ENCODE measurements at regions of chr1 and their contacts with region 1.

Region 1: GRCh38 chr1:147084273-147085096 is 87.8 kb downstream of the PRKAB2 start:
- DNase-seq: peak; percentile 81 to 85
- H3K4me3 ChIP-seq: peak overlapping the region; percentile 74 to 95 (median 88)
- H3K27ac ChIP-seq: peak overlapping the region; percentile 100
- H3K4me1 ChIP-seq: peaks cover 3 to 20% (median 12%) of the 10 kb centered on the region in 4 experiments; a peak in 6 of 7 replicates
- H3K27me3 ChIP-seq: peaks cover 21 to 62% (median 48%) of the 10 kb centered on the region in 4 experiments
- CTCF ChIP-seq: no peak
- EP300 ChIP-seq: no peak; a peak in 1 of 3 replicates
- POLR2A ChIP-seq: peak; percentile 100
- RAD21 ChIP-seq: no peak

Region 2: DNA sequence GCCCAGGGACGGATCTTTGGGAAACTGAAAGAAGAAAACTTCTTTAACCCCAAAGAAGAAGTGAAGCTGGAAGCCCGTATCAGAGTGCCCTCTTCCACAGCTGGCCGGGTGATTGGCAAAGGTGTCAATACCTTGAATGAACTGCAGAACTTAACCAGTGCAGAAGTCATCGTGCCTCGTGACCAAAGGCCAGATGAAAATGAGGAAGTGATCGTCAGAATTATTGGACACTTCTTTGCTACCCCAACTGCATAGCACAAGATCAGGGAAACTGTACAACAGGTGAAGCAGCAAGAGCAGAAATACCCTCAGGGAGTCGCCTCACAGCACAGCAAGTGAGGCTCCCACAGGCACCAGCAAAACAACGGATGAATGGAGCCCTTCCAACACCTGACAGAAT is 32.3 kb before region 1 on chr1:
- CTCF ChIA-PET with region 1: no interaction called
- POLR2A ChIA-PET with region 1: interaction called, 22 read pairs
- DNase-seq: no peak
- H3K4me3 ChIP-seq: no peak overlapping the region
- H3K27ac ChIP-seq: no peak overlapping the region
- H3K4me1 ChIP-seq: no peaks in the 10 kb centered on the region
- H3K27me3 ChIP-seq: no peaks in the 10 kb centered on the region
- CTCF ChIP-seq: no peak
- EP300 ChIP-seq: no peak
- POLR2A ChIP-seq: no peak
- RAD21 ChIP-seq: no peak

Region 3: DNA sequence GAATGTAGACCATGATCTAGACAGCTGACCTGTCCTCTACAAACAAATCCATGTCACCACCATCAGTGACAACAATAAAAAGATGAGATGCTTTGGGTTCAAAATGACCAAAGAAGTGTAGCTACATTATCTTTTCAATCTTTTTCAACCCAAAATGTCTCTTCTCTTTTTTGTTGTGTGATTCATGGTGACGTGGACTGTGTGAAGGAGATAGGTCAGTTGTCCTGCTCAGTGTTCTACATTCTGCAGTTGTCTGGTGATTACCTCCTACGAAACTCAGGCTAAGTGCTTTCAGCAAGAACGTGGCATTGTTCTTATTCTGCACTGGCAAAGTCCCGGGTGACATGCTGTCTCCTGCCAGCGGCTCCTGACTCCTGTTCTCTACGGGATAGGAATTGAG is 14.7 kb after region 1 on chr1:
- CTCF ChIA-PET with region 1: interaction called, 4 read pairs
- POLR2A ChIA-PET with region 1: interaction called, 47 read pairs
- DNase-seq: no peak
- H3K4me3 ChIP-seq: no peak overlapping the region
- H3K27ac ChIP-seq: no peak overlapping the region
- H3K4me1 ChIP-seq: peaks cover 0 to 3% (median 0%) of the 10 kb centered on the region in 4 experiments; a peak in 1 of 7 replicates
- H3K27me3 ChIP-seq: no peaks in the 10 kb centered on the region
- CTCF ChIP-seq: no peak
- EP300 ChIP-seq: no peak
- POLR2A ChIP-seq: no peak
- RAD21 ChIP-seq: no peak

Region 4: GRCh38 chr1:147124266-147124665 is 39.8 kb after region 1 on chr1:
- CTCF ChIA-PET with region 1: no interaction called
- POLR2A ChIA-PET with region 1: interaction called, 12 read pairs
- DNase-seq: no peak
- H3K4me3 ChIP-seq: no peak overlapping the region
- H3K27ac ChIP-seq: no peak overlapping the region
- H3K4me1 ChIP-seq: peaks cover 0 to 5% (median 0%) of the 10 kb centered on the region in 4 experiments; a peak in 3 of 7 replicates
- H3K27me3 ChIP-seq: no peaks in the 10 kb centered on the region
- CTCF ChIP-seq: no peak
- EP300 ChIP-seq: no peak
- POLR2A ChIP-seq: no peak
- RAD21 ChIP-seq: no peak

Region 5: DNA sequence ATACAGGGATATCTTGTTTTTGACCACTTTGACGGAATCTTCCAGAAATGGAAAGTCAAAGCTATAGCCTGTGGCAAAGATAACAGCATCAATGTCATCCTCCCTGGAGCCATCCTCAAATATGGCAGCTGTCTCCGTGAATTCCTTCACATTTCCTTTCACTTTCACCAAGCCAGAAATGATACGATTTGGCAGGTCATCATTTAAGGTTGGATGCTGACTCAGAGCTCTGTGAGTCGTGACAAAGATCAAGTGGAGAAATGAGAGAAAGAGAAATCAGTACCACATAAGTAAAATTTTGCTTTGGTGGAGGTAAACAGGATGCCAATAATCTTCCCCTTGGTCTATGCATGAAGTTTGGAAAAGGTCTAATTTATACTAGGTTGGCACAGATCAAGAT is 116.8 kb after region 1 on chr1:
- CTCF ChIA-PET with region 1: no interaction called
- POLR2A ChIA-PET with region 1: no interaction called
- DNase-seq: no peak
- H3K4me3 ChIP-seq: no peak overlapping the region
- H3K27ac ChIP-seq: no peak overlapping the region
- H3K4me1 ChIP-seq: no peaks in the 10 kb centered on the region
- H3K27me3 ChIP-seq: no peaks in the 10 kb centered on the region
- CTCF ChIP-seq: no peak
- EP300 ChIP-seq: no peak
- POLR2A ChIP-seq: no peak
- RAD21 ChIP-seq: no peak

Region 6: GRCh38 chr1:147225193-147225730 is 140.8 kb after region 1 on chr1 and contains the start of gene FMO5:
- CTCF ChIA-PET with region 1: no interaction called
- POLR2A ChIA-PET with region 1: interaction called, 19 read pairs
- DNase-seq: peak; percentile 44 to 65
- H3K4me3 ChIP-seq: peak within 1 kb of the TSS; percentile 55 to 82 (median 76)
- H3K27ac ChIP-seq: no peak within 1 kb of the TSS
- H3K4me1 ChIP-seq: peaks cover 0 to 6% (median 4%) of the 10 kb centered on the region in 4 experiments; a peak in 4 of 7 replicates
- H3K27me3 ChIP-seq: peaks cover 0 to 3% (median 0%) of the 10 kb centered on the region in 4 experiments; a peak in 2 of 7 replicates
- CTCF ChIP-seq: peak in 1 of 3 experiments; percentile 12; a peak in 1 of 4 replicates
- EP300 ChIP-seq: no peak
- POLR2A ChIP-seq: no peak
- RAD21 ChIP-seq: no peak
- total RNA-seq, gene FMO5: 0.34 TPM in 2 replicates

Region 7: GRCh38 chr1:147252540-147252939 is 168.1 kb after region 1 on chr1:
- CTCF ChIA-PET with region 1: no interaction called
- POLR2A ChIA-PET with region 1: interaction called, 15 read pairs
- DNase-seq: no peak
- H3K4me3 ChIP-seq: no peak overlapping the region
- H3K27ac ChIP-seq: no peak overlapping the region
- H3K4me1 ChIP-seq: peaks cover 0 to 3% (median 0%) of the 10 kb centered on the region in 4 experiments; a peak in 1 of 7 replicates
- H3K27me3 ChIP-seq: no peaks in the 10 kb centered on the region
- CTCF ChIP-seq: no peak
- EP300 ChIP-seq: no peak
- POLR2A ChIP-seq: no peak
- RAD21 ChIP-seq: no peak

Measured in H1 (cell line).